Gastrocnemius medialis (tissue), 4 donors: ENCODE measurements at regions of chr5 and their contacts with region 1.

Region 1: DNA sequence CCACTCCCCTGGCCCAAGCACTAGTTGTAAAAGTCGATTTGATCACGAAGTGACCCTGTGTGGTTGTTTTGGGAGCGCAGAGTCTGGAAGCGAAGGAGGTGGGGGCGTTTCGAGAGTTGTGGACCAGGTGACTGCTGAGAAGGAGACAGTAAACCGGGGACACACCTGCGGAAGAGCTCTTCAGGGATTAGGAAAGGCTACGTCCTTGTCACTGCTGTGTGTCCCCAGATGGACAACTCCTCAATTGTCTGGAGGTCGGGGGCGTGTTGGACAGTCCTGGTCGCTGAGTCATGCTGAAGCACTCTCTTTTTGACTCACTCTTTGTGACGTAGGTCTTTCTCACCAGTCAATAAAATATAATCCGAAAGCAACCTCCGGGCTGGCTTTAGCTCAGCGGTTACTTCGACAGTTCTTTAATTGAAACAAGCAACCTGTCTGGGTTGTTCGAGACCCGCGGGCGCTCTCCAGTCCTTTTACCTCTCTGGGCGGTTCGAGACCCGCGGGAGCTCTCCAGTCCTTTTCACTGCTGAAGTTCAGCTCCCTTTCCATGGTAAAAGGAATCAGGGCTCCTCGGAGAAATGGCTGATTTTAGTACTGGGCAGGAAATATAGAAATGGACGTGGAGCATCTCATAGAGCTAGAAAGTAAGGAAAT is 10.8 kb downstream of the ZMAT2 start:
- DNase-seq: peak; percentile 79 to 88
- ATAC-seq: peak; percentile 92 to 95
- H3K4me3 ChIP-seq: peak overlapping the region; percentile 57 to 66 (median 62)
- H3K27ac ChIP-seq: peak overlapping the region; percentile 82 to 91 (median 86)
- H3K4me1 ChIP-seq: peaks cover 0 to 13% of the 10 kb centered on the region in 2 donors
- H3K27me3 ChIP-seq: no peaks in the 10 kb centered on the region
- CTCF ChIP-seq: no peak
- POLR2A ChIP-seq: peak; percentile 56 to 63

Region 2: DNA sequence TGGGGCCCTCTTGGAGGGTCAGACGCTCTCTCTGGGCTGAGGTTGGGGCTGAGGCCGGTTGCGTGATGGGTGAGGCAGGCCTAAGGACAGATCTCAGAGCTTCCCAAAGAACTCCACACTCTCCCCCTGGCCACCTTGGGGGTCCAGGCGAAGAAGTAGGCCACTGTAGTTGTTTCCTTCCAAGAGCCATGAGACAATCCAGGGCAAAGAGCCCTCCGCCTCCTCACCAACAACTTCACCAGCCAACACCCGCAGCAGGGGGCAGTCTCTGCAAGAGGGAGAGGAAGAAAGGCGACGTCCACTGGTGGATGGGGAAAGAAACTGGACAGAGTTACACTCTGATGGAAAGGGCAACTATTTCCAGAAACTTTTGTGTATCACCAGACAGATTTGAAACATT is 135.7 kb before region 1 on chr5:
- in situ Hi-C with region 1: no loop called
- intact Hi-C with region 1: loop called (anchors 5 kb)
- DNase-seq: peak in 1 of 2 donors; percentile 63
- ATAC-seq: peak in 1 of 2 donors; percentile 66
- H3K4me3 ChIP-seq: no peak overlapping the region
- H3K27ac ChIP-seq: peak overlapping the region in 1 of 4 donors; percentile 63
- H3K4me1 ChIP-seq: peaks cover 28% of the 10 kb centered on the region in 2 donors
- H3K27me3 ChIP-seq: no peaks in the 10 kb centered on the region
- CTCF ChIP-seq: peak in 2 of 5 experiments; percentile 34 to 36
- POLR2A ChIP-seq: no peak

Region 3: GRCh38 chr5:140700177-140701144 is 10.6 kb before region 1 on chr5 and contains the start of gene ZMAT2:
- in situ Hi-C with region 1: no loop called
- intact Hi-C with region 1: loop called (anchors 1 kb)
- DNase-seq: peak; percentile 92 to 96
- ATAC-seq: peak; percentile 100
- H3K4me3 ChIP-seq: peak within 1 kb of the TSS; percentile 66 to 98 (median 80)
- H3K27ac ChIP-seq: peak within 1 kb of the TSS; percentile 79 to 89 (median 82)
- H3K4me1 ChIP-seq: peaks cover 15 to 16% of the 10 kb centered on the region in 2 donors
- H3K27me3 ChIP-seq: no peaks in the 10 kb centered on the region
- CTCF ChIP-seq: no peak
- POLR2A ChIP-seq: peak; percentile 84 to 87
- total RNA-seq, gene ZMAT2: 44.2 to 56.5 (median 51.9) TPM

Region 4: DNA sequence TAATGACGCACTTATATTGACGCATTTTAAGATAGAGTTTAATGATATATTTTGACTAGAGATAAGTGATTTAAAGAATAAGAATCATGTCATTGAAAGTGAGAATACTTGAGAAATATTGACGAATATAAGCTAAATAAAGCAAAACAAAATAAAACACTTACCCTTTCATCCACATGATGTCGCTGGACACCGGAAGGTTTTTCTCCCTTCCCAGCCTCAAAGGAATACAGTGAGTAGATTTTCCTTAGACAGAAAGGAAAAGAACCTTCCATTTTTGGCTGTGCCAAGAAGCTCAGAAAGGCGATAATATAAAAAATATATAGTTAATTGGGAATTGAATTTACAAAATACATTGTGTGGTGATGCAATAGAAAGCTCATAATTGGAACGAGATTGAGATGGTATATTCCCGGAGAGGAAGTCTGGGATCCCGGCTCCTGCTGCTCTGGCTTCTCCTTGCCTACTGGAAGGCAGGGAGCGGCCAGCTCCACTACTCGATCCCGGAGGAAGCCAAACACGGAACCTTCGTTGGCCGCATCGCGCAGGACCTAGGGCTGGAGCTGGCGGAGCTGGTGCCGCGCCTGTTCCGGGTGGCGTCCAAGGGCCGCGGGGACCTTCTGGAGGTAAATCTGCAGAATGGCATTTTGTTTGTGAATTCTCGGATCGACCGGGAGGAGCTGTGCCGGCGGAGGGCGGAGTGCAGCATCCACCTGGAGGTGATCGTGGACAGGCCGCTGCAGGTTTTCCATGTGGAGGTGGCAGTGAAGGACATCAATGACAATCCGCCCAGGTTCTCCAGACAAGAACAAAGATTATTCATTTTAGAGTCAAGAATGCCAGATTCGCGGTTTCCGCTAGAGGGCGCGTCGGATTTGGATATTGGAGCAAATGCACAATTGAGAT is 110.6 kb after region 1 on chr5 and contains the start of gene PCDHA5:
- in situ Hi-C with region 1: no loop called
- intact Hi-C with region 1: no loop called
- DNase-seq: no peak
- ATAC-seq: no peak
- H3K4me3 ChIP-seq: peak within 1 kb of the TSS in 1 of 4 donors; percentile 2
- H3K27ac ChIP-seq: no peak within 1 kb of the TSS
- H3K4me1 ChIP-seq: no peaks in the 10 kb centered on the region
- H3K27me3 ChIP-seq: peaks cover 0 to 11% (median 8%) of the 10 kb centered on the region in 3 donors
- CTCF ChIP-seq: no peak
- POLR2A ChIP-seq: no peak
- total RNA-seq, gene PCDHA5: not detected

Region 5: GRCh38 chr5:141155540-141156374 is 444.7 kb after region 1 on chr5:
- in situ Hi-C with region 1: no loop called
- intact Hi-C with region 1: no loop called
- DNase-seq: no peak
- ATAC-seq: no peak
- H3K4me3 ChIP-seq: no peak overlapping the region
- H3K27ac ChIP-seq: no peak overlapping the region
- H3K4me1 ChIP-seq: no peaks in the 10 kb centered on the region
- H3K27me3 ChIP-seq: peaks cover 0 to 10% (median 0%) of the 10 kb centered on the region in 3 donors
- CTCF ChIP-seq: no peak
- POLR2A ChIP-seq: no peak